ENCODE measurements at regions of chr1 and their contacts with region 1.

Region 1: GRCh38 chr1:230140221-230141020 is 73.4 kb downstream of the GALNT2 start:
- DNase-seq: peak in 1 of 4 experiments; percentile 73
- ATAC-seq: peak; percentile 37
- H3K4me3 ChIP-seq: no peak overlapping the region
- H3K27ac ChIP-seq: peak overlapping the region; percentile 6; the same call in 2 of the 3 replicates
- H3K4me1 ChIP-seq: peaks cover 78 to 80% of the 10 kb centered on the region in 2 experiments
- H3K27me3 ChIP-seq: no peaks in the 10 kb centered on the region
- CTCF ChIP-seq: no peak
- EP300 ChIP-seq: 0 out of 2 replicates have a peak, but pooled peaks have one; percentile 16
- POLR2A ChIP-seq: no peak
- RAD21 ChIP-seq: no peak

Region 2: GRCh38 chr1:229730573-229730972 is 409.8 kb before region 1 on chr1:
- CTCF ChIA-PET with region 1: no interaction called
- POLR2A ChIA-PET with region 1: no interaction called
- in situ Hi-C with region 1: no loop called
- intact Hi-C with region 1: no loop called
- DNase-seq: no peak
- ATAC-seq: peak; percentile 42; the same call in 1 of the 3 replicates
- H3K4me3 ChIP-seq: no peak overlapping the region
- H3K27ac ChIP-seq: no peak overlapping the region
- H3K4me1 ChIP-seq: no peaks in the 10 kb centered on the region
- H3K27me3 ChIP-seq: peaks cover 10 to 22% of the 10 kb centered on the region in 2 experiments; a peak in 4 of 5 replicates
- CTCF ChIP-seq: no peak
- EP300 ChIP-seq: no peak
- POLR2A ChIP-seq: no peak
- RAD21 ChIP-seq: no peak

Region 3: DNA sequence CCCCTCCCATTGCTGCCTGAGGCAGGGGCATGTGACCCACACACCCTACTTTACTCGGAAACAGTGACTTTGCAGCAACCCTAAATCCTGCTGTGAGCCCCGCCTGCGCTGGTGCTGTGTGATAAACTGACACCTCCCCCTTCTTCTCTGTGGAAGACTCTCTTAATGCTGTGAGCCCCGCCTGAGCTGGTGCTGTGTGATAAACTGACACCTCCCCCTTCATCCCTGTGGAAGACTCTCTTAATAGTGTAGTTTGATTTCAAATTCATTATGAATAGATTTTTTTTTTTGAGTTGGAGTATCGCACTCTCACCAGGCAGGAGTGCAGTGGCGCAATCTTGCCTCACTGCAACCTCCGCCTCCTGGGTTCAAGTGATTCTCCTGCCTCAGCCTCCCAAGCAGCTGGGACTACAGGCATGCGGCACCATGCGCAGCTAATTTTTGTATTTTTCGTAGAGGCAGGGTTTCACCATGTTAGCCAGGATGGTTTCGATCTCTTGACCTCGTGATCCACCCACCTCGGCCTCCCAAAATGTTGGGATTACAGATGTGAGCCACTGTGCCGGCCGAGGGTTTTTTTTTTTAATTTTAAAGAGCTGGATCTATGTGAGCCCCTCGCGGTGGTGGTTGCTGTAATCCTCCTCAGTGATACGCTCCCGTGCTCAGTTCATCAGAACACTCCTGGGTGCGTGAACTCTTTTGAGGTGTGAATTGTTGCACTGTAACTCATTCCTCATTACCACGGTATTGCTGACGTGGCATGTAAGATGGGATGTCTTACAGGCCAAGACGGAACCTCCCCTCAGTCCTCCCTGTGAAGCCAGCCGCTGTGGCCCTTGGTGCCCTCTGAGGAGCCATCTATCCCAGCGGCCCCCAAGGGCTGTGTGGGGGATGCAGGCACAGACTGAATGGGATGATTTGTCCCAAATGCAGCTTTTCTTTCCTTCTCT is 13.0 kb before region 1 on chr1:
- CTCF ChIA-PET with region 1: no interaction called
- POLR2A ChIA-PET with region 1: interaction called, 20 read pairs
- in situ Hi-C with region 1: no loop called
- intact Hi-C with region 1: loop called (anchors 2 kb)
- DNase-seq: peak; percentile 82 to 99 (median 90)
- ATAC-seq: peak; percentile 94
- H3K4me3 ChIP-seq: no peak overlapping the region
- H3K27ac ChIP-seq: peak overlapping the region; percentile 76
- H3K4me1 ChIP-seq: peaks cover 64 to 74% of the 10 kb centered on the region in 2 experiments
- H3K27me3 ChIP-seq: no peaks in the 10 kb centered on the region
- CTCF ChIP-seq: peak in 1 of 3 experiments; percentile 26; a peak in 2 of 6 replicates
- EP300 ChIP-seq: peak; percentile 98
- POLR2A ChIP-seq: no peak
- RAD21 ChIP-seq: no peak; a peak in 2 of 4 replicates

Region 4: DNA sequence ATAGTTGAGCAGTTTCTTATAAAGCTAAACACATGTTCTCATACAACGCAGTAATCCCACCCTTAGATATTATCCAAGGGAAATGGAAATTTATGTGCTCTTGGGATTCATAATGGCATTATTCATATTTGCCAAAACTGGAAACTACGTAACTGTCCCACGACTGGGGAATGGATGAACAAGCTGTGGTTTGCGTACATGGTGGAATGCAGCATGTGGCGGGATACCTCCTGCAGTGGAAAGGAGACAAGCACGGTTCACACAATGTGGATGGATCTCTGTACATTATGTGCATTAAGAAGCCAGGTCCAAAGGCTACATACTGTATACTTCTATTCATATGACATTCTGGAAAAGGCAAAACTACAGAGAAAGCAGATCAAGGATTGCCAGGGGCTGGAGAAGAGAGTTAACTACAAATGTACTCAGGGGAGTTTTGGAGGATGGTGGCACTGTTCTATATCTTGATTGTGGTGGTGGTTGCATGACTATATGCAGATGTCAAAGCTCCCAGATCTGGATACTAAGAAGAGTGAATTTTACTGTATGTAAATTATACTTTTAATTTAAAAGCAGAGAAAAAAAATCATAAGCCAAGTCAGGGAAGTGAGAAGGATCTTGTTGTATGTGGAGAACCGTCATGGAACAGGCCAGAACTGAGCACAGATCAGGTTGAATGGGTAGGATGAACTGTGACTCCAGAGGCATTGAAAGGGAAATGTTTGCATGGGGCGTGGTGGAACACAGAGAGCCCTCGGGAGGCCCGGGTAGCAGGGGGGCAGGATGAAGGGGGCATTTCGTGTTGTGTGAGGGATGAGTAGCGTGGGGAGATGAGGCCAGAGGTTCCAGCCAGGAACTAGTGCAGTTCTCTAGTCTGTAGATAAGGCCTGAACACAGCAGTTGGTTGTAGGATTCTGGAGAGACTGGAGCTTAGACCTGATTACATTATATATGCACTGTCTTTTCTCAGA is 17.3 kb after region 1 on chr1:
- CTCF ChIA-PET with region 1: no interaction called
- POLR2A ChIA-PET with region 1: interaction called, 17 read pairs
- in situ Hi-C with region 1: no loop called
- intact Hi-C with region 1: loop called (anchors 1 kb)
- DNase-seq: peak in 1 of 4 experiments; percentile 59
- ATAC-seq: peak; percentile 40
- H3K4me3 ChIP-seq: no peak overlapping the region
- H3K27ac ChIP-seq: 0 out of 3 replicates have a peak overlapping the region, but pooled peaks have one; percentile 17
- H3K4me1 ChIP-seq: peaks cover 54 to 91% of the 10 kb centered on the region in 2 experiments
- H3K27me3 ChIP-seq: no peaks in the 10 kb centered on the region
- CTCF ChIP-seq: no peak
- EP300 ChIP-seq: no peak
- POLR2A ChIP-seq: no peak
- RAD21 ChIP-seq: no peak

Region 5: DNA sequence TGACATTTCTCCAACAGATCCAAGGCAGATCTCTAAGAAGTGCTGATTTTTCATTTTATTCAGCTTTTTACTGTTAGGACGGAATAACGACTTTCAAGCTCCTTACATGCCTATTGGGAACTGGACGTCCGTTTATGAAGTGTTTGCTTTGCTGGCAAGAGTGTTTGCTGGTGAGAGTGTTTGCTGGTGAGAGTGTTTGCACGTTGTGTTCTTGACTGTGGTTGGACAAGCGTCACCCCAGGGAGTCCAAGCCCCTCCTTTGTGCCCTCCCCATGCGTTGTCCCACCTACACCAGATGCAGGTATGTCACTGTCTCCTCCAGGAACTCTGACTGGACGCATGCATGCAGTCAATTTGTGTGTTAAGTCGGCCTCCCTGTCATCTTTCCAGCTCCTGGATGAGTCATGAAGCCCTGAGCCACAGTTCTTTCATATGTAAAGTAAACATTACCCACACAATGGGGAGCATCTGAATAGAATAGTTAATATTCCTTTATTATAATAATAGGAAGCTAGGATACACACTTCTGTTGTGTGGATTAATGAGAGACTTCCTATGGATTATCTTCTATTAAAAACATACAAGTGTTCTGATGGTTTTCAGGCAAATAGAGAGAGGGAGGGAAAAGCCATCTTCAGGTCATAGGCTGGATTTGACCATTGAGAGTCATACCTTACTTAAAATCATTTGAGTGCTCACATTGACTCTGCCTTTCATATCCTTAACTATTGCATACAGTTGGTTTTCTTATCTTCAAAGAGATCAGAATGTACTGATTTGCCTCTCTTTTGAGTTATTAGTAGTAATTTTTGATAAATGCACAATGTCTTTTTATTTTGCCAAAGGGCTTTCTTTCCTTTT is 45.8 kb after region 1 on chr1:
- CTCF ChIA-PET with region 1: no interaction called
- POLR2A ChIA-PET with region 1: no interaction called
- in situ Hi-C with region 1: no loop called
- intact Hi-C with region 1: loop called (anchors 5 kb)
- DNase-seq: peak in 3 of 4 experiments; percentile 40 to 50 (median 41)
- ATAC-seq: peak; percentile 62
- H3K4me3 ChIP-seq: no peak overlapping the region
- H3K27ac ChIP-seq: peak overlapping the region; percentile 21; the same call in 1 of the 3 replicates
- H3K4me1 ChIP-seq: peaks cover 3 to 26% of the 10 kb centered on the region in 2 experiments; a peak in 4 of 5 replicates
- H3K27me3 ChIP-seq: no peaks in the 10 kb centered on the region
- CTCF ChIP-seq: no peak
- EP300 ChIP-seq: no peak
- POLR2A ChIP-seq: no peak
- RAD21 ChIP-seq: no peak